ENCODE measurements at regions of chr19 and their contacts with region 1.

Region 1: DNA sequence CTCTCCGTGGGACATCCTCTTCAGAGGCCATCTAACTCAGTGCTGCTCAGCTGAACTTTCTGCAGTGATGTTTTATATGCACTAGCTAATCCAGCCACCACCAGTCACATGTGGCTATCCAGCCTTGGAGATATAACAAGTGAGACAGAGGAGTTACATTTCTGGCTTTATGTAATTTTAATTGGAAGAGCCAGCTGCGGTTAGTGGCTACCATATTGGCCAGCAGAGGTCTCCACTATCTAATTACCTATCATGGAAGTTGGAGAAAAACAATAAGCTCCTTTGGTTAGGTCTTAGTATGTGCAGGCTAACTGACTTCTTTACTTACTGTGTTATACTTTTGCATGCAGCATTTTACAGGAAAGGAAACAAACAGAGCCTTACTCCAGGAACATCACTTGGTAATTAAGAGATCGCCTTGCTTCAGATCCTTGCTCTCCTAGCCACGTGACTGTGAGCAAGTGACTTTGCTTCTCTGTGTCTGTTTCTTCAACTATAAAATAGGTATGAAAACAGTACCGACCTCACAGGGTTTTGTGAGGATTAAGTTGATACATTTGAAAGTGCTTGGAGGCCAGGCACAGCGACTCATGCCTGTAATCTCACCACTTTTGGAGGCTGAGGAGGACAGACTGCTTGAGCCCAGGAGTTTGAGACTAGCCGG is 1.6 kb upstream of the KLK10 start:
- DNase-seq: no peak
- H3K4me3 ChIP-seq: no peak overlapping the region
- H3K27ac ChIP-seq: no peak overlapping the region
- H3K4me1 ChIP-seq: peaks cover 17 to 31% (median 28%) of the 10 kb centered on the region in 4 donors
- H3K27me3 ChIP-seq: peaks cover 0 to 93% (median 36%) of the 10 kb centered on the region in 4 donors
- CTCF ChIP-seq: peak; percentile 39 to 66 (median 57)
- EP300 ChIP-seq: no peak
- POLR2A ChIP-seq: no peak

Region 2: GRCh38 chr19:51097166-51097738 is 76.1 kb after region 1 on chr19:
- intact Hi-C with region 1: loop called (anchors 5 kb)
- DNase-seq: no peak
- H3K4me3 ChIP-seq: no peak overlapping the region
- H3K27ac ChIP-seq: no peak overlapping the region
- H3K4me1 ChIP-seq: peaks cover 5 to 33% (median 14%) of the 10 kb centered on the region in 4 donors
- H3K27me3 ChIP-seq: no peaks in the 10 kb centered on the region
- CTCF ChIP-seq: peak; percentile 37 to 68 (median 40)
- EP300 ChIP-seq: no peak
- POLR2A ChIP-seq: no peak

Measured in esophagus muscularis mucosa (tissue), 4 donors.